OCI-LY7 (cell line): ENCODE measurements at regions of chr11 and their contacts with region 1.

Region 1: DNA sequence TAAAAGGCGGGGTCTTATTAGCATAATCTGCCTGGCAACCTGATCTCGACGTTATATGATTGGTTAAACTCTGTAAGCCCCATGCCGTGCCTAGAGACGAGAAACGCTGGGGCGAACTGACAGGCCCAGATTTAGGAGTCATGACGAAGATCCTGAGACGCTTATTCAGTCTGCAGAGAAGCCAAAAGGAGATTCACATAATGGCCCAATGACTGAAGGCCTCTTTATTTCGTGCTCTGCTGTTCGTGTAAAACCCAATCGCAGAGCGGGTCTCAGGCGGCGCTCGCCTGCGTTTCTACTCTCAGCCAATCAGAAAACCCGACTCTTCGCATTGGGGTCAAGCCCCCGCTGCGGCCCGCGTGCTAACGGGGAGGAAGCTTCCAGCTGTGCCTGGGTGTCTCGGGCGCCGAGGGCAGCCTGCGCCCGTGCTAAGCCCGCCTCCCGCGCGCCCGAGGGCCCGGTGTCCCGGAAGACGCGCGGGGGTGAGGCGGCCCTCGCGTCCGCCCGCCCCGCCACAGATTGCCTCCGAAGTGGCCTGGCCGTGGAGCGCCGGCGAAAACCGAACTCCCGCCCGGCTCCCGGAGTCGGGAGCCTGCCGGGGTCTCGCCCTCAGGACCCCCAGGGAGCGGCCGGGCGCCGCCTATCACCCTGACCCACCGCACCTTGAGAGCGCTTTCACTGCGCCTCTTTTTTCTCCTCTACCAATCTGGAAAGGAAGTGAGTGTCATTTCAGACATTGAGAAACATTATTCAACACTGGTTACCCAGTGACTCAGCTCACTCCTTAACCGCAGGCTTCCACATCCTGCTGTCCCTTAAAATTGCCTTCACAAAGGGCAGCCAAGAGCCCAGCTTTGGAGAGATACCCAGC is 446 bp upstream of the PRDM10 start:
- DNase-seq: peak; percentile 99
- H3K4me3 ChIP-seq: peak overlapping the region; percentile 91
- H3K27ac ChIP-seq: peak overlapping the region; percentile 89
- H3K4me1 ChIP-seq: peaks cover 67% of the 10 kb centered on the region
- CTCF ChIP-seq: no peak; the same call in 1 of the 2 replicates

Region 2: GRCh38 chr11:129937592-129938238 is 65.4 kb before region 1 on chr11:
- CTCF ChIA-PET with region 1: no interaction called
- POLR2A ChIA-PET with region 1: interaction called, 19 read pairs
- intact Hi-C with region 1: no loop called
- DNase-seq: peak; percentile 30
- H3K4me3 ChIP-seq: no peak overlapping the region
- H3K27ac ChIP-seq: peak overlapping the region; percentile 48
- H3K4me1 ChIP-seq: peaks cover 60% of the 10 kb centered on the region
- CTCF ChIP-seq: no peak

Region 3: DNA sequence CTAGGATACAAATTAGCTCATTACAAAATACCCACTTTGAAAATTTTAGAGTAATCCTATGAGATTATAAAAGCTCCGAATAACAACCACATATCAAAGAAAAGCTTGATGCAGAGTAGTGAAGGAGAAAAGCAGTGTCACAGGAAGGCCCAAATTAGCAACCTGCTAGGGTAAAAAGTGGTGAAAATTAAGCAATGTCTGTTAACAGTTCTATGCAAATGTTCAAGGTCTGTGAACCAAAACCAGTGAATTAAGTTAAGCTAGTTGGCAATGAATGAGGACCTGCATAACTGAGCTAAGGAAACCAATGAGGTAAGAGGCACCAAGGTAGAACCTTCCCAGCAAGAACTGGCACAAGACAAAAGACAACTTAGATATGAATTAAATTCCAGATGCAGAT is 30.0 kb before region 1 on chr11:
- CTCF ChIA-PET with region 1: interaction called, 3 read pairs
- POLR2A ChIA-PET with region 1: interaction called, 228 read pairs
- intact Hi-C with region 1: loop called (anchors 2 kb)
- DNase-seq: peak; percentile 94
- H3K4me3 ChIP-seq: peak overlapping the region; percentile 60
- H3K27ac ChIP-seq: peak overlapping the region; percentile 98
- H3K4me1 ChIP-seq: peaks cover 88% of the 10 kb centered on the region
- CTCF ChIP-seq: no peak

Region 4: GRCh38 chr11:130022798-130023583 is 19.9 kb after region 1 on chr11:
- CTCF ChIA-PET with region 1: interaction called, 4 read pairs
- POLR2A ChIA-PET with region 1: interaction called, 12 read pairs
- intact Hi-C with region 1: no loop called
- DNase-seq: peak; percentile 98
- H3K4me3 ChIP-seq: peak overlapping the region; percentile 49
- H3K27ac ChIP-seq: peak overlapping the region; percentile 76
- H3K4me1 ChIP-seq: peaks cover 75% of the 10 kb centered on the region
- CTCF ChIP-seq: no peak

Region 5: GRCh38 chr11:130069684-130070108 is 66.6 kb after region 1 on chr11 and contains the start of gene APLP2:
- CTCF ChIA-PET with region 1: interaction called, 11 read pairs
- POLR2A ChIA-PET with region 1: interaction called, 44 read pairs
- intact Hi-C with region 1: loop called (anchors 1 kb)
- DNase-seq: peak; percentile 99
- H3K4me3 ChIP-seq: peak within 1 kb of the TSS; percentile 81
- H3K27ac ChIP-seq: peak within 1 kb of the TSS; percentile 57
- H3K4me1 ChIP-seq: peaks cover 49% of the 10 kb centered on the region
- CTCF ChIP-seq: no peak
- total RNA-seq, gene APLP2: 144 and 147 TPM in 2 replicates

Region 6: DNA sequence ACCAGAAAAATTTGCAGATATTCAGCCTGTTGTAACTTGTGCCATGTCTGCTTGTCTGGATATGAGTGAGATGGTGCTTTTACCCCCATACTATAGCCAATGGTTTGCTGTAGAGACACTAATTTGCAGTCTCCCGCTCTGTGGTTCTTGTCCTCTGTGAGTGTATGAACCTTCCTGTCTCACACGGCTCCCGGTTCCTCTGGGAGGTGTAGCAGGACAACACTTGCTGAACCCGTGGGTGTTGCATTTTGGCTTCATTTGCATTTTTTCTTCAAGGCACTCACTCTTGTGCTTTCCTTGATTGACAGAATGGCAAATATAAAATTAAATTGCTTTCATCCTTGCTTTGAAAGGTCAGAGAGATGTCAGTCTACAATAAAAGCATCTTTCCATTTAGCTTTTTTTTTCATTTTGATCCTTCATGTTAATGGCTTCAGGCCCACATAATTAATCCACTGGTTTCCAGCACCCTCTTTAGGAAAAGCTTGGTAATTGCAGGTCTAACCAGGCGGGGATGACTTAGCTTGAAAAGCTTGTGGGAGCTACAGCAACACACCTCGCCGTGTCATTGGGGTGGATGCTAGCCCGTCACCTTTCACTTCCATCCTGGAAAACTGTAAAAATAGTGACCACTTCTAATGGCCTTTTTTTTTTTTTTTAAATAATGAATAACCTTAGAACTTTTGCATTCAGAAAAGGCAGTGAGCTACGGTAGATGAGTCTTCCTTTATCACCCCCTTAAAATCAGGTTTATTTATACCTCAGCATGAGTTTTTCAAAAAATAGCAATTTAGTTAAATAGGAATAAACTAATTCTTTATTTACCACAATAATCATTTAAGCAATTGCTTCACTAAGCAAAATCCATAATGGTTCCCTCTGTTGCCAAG is 129.1 kb after region 1 on chr11:
- CTCF ChIA-PET with region 1: interaction called, 12 read pairs
- POLR2A ChIA-PET with region 1: interaction called, 41 read pairs
- intact Hi-C with region 1: loop called (anchors 1 kb)
- DNase-seq: peak; percentile 83
- H3K4me3 ChIP-seq: no peak overlapping the region
- H3K27ac ChIP-seq: peak overlapping the region; percentile 51
- H3K4me1 ChIP-seq: peaks cover 23% of the 10 kb centered on the region
- CTCF ChIP-seq: peak; percentile 99

Region 7: GRCh38 chr11:130314750-130315285 is 311.7 kb after region 1 on chr11 and contains the start of gene ZBTB44:
- CTCF ChIA-PET with region 1: no interaction called
- POLR2A ChIA-PET with region 1: no interaction called
- intact Hi-C with region 1: loop called (anchors 10 kb)
- DNase-seq: peak; percentile 94
- H3K4me3 ChIP-seq: peak within 1 kb of the TSS; percentile 89
- H3K27ac ChIP-seq: peak within 1 kb of the TSS; percentile 78
- H3K4me1 ChIP-seq: peaks cover 42% of the 10 kb centered on the region
- CTCF ChIP-seq: no peak
- total RNA-seq, gene ZBTB44: 43.3 and 60.2 TPM in 2 replicates